AG04450 (cell line): ENCODE measurements at regions of chr22 and their contacts with region 1.

Region 1: DNA sequence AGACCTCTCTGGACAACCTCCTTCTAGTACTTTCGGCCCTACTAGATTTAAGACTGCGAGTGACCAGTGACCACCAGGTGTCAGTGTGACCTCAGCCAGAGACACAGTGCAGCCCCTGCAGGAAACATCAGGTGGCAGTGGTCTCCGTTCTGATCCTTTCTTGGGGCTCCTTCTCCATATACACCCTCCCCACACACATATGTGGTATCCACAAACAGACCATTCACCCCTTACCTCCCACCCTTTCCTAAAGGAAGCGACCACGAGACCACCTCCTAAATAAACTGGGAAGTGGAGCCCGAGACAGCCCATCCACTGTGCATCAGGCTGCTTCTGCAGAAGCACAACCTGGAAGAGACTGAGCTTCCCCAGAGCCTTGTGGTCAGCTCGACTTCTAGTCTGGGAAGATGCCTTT is 38.5 kb upstream of the CYP2D6 start:
- DNase-seq: peak; percentile 37
- H3K4me3 ChIP-seq: no peak overlapping the region
- H3K27ac ChIP-seq: no peak overlapping the region
- H3K27me3 ChIP-seq: no peaks in the 10 kb centered on the region
- CTCF ChIP-seq: peak; percentile 99

Region 2: DNA sequence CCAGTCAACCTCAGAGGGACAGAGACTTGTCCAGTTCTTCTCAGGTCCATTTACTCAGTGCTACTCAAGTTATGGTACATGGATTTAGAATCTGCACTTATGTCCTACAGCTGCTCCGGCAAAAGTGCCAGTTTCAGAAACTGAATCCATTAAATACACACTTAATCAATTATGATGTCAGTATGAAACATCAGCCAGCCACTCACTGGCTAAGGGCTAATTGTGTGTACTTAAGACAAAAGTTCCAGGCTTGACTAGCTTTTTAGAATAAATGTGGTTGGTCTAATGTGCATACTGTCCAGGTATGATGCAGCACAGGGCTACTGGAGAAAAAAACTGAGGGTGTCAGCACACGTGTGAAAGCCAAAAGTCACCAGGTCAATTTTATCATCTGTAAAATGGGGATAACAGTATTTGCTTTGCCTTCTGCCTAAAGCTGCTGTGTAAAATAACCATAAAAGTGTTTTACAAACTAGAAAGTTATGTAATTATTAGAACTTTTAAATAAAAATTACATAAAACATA is 16.9 kb after region 1 on chr22:
- CTCF ChIA-PET with region 1: no interaction called
- POLR2A ChIA-PET with region 1: no interaction called
- DNase-seq: no peak
- H3K4me3 ChIP-seq: no peak overlapping the region
- H3K27ac ChIP-seq: no peak overlapping the region
- H3K27me3 ChIP-seq: no peaks in the 10 kb centered on the region
- CTCF ChIP-seq: no peak

Region 3: DNA sequence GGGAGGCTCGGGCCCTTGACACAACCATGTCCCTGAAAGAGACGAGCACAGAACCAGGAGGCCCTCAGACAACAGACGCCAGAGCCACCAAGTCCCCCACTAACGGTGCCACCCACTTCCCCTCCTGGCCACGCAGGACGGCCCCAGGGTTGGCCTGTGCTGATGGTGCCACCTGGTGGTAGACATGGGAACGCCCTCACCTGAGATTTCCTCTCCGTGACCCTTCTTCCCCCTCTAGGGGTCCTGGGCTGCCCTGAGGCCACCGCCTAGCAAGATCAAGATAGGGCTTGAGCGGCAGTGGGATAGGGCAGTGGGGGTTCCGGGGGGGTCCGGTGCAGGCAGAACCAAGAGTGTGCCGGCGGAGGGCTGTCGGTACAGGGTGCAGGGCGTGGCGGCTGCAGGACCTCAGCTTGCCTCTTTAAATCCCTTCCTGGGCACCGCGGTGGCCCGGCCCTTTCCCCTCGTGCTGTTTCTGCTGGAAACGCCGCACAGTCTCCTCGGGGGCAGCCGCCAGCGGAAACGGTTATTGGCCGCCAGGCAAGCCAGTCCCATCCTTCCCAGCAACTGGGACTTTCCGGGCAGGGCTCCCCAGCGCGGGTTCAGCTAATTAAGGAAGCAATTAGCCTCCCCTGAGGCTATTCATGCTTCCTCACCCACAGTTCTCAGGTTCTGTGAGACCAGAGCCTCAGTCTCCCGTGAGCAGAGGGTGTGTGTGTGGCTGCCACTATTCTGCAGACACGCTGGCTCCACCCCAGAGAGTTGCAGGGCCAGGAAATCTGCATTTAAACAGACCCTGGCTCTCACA is 268.6 kb after region 1 on chr22:
- CTCF ChIA-PET with region 1: interaction called, 40 read pairs
- POLR2A ChIA-PET with region 1: no interaction called
- DNase-seq: no peak
- H3K4me3 ChIP-seq: peak overlapping the region; percentile 57
- H3K27ac ChIP-seq: no peak overlapping the region
- H3K27me3 ChIP-seq: peaks cover 35% of the 10 kb centered on the region
- CTCF ChIP-seq: peak; percentile 97